BJ (cell line): ENCODE measurements at regions of chr19 and their contacts with region 1.

Region 1: GRCh38 chr19:1260636-1261537 is 8.2 kb upstream of the CIRBP start:
- DNase-seq: no peak
- H3K4me3 ChIP-seq: peak overlapping the region; percentile 64
- H3K27me3 ChIP-seq: no peaks in the 10 kb centered on the region
- CTCF ChIP-seq: no peak

Region 2: DNA sequence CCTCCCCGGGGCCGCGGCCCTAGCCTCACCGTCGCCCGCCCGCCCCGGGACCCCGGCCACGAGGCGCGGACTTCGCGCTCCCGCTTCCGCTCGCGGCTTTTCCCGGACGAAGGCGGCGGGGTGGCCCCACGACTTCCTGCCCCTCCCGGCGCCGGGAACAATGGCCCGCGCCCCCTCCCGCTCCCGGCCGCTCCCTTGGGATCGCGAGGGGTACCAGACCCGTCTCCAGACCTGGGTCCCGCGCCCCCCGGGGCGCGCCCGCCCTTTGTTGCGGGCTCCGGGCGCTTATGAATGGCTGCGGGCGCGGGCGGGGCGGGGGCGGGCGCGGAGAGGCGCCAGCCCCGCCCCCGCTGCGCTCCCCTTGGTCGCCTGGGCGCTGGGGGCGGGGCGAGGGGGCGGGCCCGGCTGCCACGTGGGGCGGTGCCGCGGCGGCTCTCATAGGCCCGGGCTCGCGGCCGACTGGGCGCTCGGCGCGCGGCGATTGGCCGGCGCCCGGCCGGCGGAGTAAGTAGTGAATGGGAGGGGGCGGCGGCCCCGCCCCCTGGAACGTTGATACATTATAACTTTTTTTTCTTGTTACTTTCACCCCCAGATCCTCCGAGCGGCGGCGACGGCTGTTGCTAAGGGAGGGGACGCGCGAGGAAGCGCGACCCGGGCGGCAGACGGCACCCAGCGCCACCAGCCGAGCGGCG is 11.4 kb before region 1 on chr19:
- CTCF ChIA-PET with region 1: interaction called, 437 read pairs
- POLR2A ChIA-PET with region 1: interaction called, 18 read pairs
- DNase-seq: no peak
- H3K4me3 ChIP-seq: peak overlapping the region; percentile 81
- H3K27me3 ChIP-seq: no peaks in the 10 kb centered on the region
- CTCF ChIP-seq: no peak